ENCODE measurements at regions of chr12 and their contacts with region 1.

Region 1: DNA sequence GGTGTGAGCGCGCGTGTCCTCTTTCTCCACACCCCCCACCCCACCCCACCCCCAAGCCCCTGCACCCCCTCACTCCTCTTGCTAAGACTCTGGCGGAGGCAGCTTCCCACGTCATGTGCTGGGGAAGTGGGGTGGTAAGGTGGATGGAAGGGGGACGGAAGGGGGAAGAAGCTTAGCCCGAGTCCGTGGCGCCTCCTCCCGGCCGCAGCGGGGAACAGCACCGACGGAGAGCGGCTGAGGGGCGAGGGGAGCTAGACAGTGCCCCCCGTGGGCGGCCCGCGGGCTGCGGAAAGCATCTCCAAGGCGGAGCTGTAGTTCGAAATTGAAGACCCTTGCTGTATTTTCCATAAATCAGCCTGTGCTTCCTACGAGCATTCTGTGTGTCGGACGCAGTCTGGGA is 588 bp upstream of the GRIN2B start:
- DNase-seq: peak; percentile 79 to 92
- H3K4me3 ChIP-seq: peak overlapping the region; percentile 91
- H3K4me3 Mint-ChIP-seq: peak overlapping the region; percentile 98
- H3K27ac Mint-ChIP-seq: no peak overlapping the region
- H3K4me1 ChIP-seq: no peaks in the 10 kb centered on the region
- H3K4me1 Mint-ChIP-seq: peaks cover 11% of the 10 kb centered on the region
- H3K27me3 ChIP-seq: no peaks in the 10 kb centered on the region
- H3K27me3 Mint-ChIP-seq: no peaks in the 10 kb centered on the region
- CTCF ChIP-seq: peak; percentile 98

Region 2: GRCh38 chr12:13864081-13864673 is 117.8 kb before region 1 on chr12:
- CTCF ChIA-PET with region 1: interaction called, 56 read pairs
- POLR2A ChIA-PET with region 1: no interaction called
- intact Hi-C with region 1: loop called (anchors 1 kb)
- DNase-seq: peak; percentile 84 to 87
- H3K4me3 ChIP-seq: no peak overlapping the region
- H3K4me3 Mint-ChIP-seq: no peak overlapping the region
- H3K27ac Mint-ChIP-seq: no peak overlapping the region
- H3K4me1 ChIP-seq: peaks cover 23% of the 10 kb centered on the region
- H3K4me1 Mint-ChIP-seq: peaks cover 35% of the 10 kb centered on the region
- H3K27me3 ChIP-seq: no peaks in the 10 kb centered on the region
- H3K27me3 Mint-ChIP-seq: no peaks in the 10 kb centered on the region
- CTCF ChIP-seq: peak; percentile 98 to 99

Region 3: DNA sequence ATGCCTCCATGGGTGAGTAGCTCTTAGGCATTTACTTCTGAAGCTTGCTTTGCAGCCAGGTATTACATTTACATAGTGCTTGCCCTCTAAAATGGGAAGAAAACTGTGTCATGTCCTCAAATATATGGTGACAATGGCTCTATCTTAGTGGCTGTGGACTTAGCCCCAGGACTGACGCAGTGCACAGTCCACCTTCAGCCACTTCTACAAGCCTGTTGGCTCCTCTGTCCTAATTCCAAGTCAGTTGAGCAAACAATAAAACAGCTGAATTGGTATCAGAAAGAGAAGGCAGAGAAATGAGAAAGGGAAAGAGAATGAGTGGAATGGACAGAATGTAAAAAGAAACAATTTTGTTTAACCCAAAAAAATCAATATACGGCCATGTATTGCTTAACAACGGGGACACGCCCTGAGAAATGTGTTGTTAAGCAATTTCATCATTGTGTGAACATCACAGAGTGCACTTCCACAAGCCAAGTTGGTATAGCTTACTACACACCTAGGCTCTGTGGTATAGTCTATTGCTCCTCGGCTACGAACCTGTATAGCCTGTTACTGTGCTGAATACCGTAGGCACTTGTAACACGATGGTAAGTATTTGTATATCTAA is 94.1 kb before region 1 on chr12:
- CTCF ChIA-PET with region 1: interaction called, 5 read pairs
- POLR2A ChIA-PET with region 1: no interaction called
- intact Hi-C with region 1: loop called (anchors 5 kb)
- DNase-seq: peak; percentile 64 to 65
- H3K4me3 ChIP-seq: no peak overlapping the region
- H3K4me3 Mint-ChIP-seq: peak overlapping the region; percentile 33
- H3K27ac Mint-ChIP-seq: peak overlapping the region; percentile 79
- H3K4me1 ChIP-seq: peaks cover 16% of the 10 kb centered on the region
- H3K4me1 Mint-ChIP-seq: peaks cover 40% of the 10 kb centered on the region
- H3K27me3 ChIP-seq: no peaks in the 10 kb centered on the region
- H3K27me3 Mint-ChIP-seq: no peaks in the 10 kb centered on the region
- CTCF ChIP-seq: no peak

Region 4: GRCh38 chr12:13950502-13950901 is 31.5 kb before region 1 on chr12:
- CTCF ChIA-PET with region 1: interaction called, 17 read pairs
- POLR2A ChIA-PET with region 1: interaction called, 4 read pairs
- intact Hi-C with region 1: loop called (anchors 2 kb)
- DNase-seq: peak; percentile 71 to 79
- H3K4me3 ChIP-seq: no peak overlapping the region
- H3K4me3 Mint-ChIP-seq: peak overlapping the region; percentile 36
- H3K27ac Mint-ChIP-seq: peak overlapping the region; percentile 69
- H3K4me1 ChIP-seq: peaks cover 46% of the 10 kb centered on the region
- H3K4me1 Mint-ChIP-seq: peaks cover 44% of the 10 kb centered on the region
- H3K27me3 ChIP-seq: no peaks in the 10 kb centered on the region
- H3K27me3 Mint-ChIP-seq: no peaks in the 10 kb centered on the region
- CTCF ChIP-seq: no peak

Region 5: GRCh38 chr12:13992106-13992505 is 10.1 kb after region 1 on chr12:
- CTCF ChIA-PET with region 1: interaction called, 17 read pairs
- POLR2A ChIA-PET with region 1: no interaction called
- intact Hi-C with region 1: no loop called
- DNase-seq: peak in 1 of 2 experiments; percentile 36
- H3K4me3 ChIP-seq: no peak overlapping the region
- H3K4me3 Mint-ChIP-seq: no peak overlapping the region
- H3K27ac Mint-ChIP-seq: peak overlapping the region; percentile 2
- H3K4me1 ChIP-seq: peaks cover 27% of the 10 kb centered on the region
- H3K4me1 Mint-ChIP-seq: peaks cover 34% of the 10 kb centered on the region
- H3K27me3 ChIP-seq: no peaks in the 10 kb centered on the region
- H3K27me3 Mint-ChIP-seq: no peaks in the 10 kb centered on the region
- CTCF ChIP-seq: no peak

Region 6: DNA sequence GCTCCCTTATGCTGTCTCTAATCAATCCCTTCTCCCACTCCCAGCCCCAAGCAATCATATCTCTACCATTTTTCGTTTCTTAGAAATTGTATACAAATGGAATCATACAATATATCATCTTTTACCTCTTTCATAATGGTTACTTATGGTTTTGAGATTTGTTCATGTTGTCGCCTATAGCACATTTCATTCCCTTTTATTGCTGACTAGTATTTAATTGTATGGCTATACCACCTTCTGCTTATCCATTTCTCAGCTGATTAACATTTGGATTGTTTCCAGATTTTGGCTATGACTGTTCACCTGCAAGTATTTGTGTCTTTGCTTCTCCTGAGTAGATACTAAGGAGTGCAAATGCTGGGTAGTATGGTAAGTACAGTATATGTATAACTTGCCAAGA is 36.1 kb after region 1 on chr12:
- CTCF ChIA-PET with region 1: no interaction called
- POLR2A ChIA-PET with region 1: no interaction called
- intact Hi-C with region 1: no loop called
- DNase-seq: no peak
- H3K4me3 ChIP-seq: no peak overlapping the region
- H3K4me3 Mint-ChIP-seq: no peak overlapping the region
- H3K27ac Mint-ChIP-seq: no peak overlapping the region
- H3K4me1 ChIP-seq: no peaks in the 10 kb centered on the region
- H3K4me1 Mint-ChIP-seq: no peaks in the 10 kb centered on the region
- H3K27me3 ChIP-seq: no peaks in the 10 kb centered on the region
- H3K27me3 Mint-ChIP-seq: no peaks in the 10 kb centered on the region
- CTCF ChIP-seq: no peak

Region 7: GRCh38 chr12:14148489-14149270 is 166.7 kb after region 1 on chr12:
- CTCF ChIA-PET with region 1: no interaction called
- POLR2A ChIA-PET with region 1: no interaction called
- intact Hi-C with region 1: no loop called
- DNase-seq: no peak
- H3K4me3 ChIP-seq: no peak overlapping the region
- H3K4me3 Mint-ChIP-seq: no peak overlapping the region
- H3K27ac Mint-ChIP-seq: no peak overlapping the region
- H3K4me1 ChIP-seq: no peaks in the 10 kb centered on the region
- H3K4me1 Mint-ChIP-seq: no peaks in the 10 kb centered on the region
- H3K27me3 ChIP-seq: no peaks in the 10 kb centered on the region
- H3K27me3 Mint-ChIP-seq: no peaks in the 10 kb centered on the region
- CTCF ChIP-seq: no peak

Region 8: GRCh38 chr12:14284184-14284722 is 302.3 kb after region 1 on chr12:
- CTCF ChIA-PET with region 1: no interaction called
- POLR2A ChIA-PET with region 1: no interaction called
- intact Hi-C with region 1: no loop called
- DNase-seq: no peak
- H3K4me3 ChIP-seq: no peak overlapping the region
- H3K4me3 Mint-ChIP-seq: no peak overlapping the region
- H3K27ac Mint-ChIP-seq: no peak overlapping the region
- H3K4me1 ChIP-seq: no peaks in the 10 kb centered on the region; the same call in 1 of the 2 replicates
- H3K4me1 Mint-ChIP-seq: peaks cover 6% of the 10 kb centered on the region
- H3K27me3 ChIP-seq: no peaks in the 10 kb centered on the region
- H3K27me3 Mint-ChIP-seq: no peaks in the 10 kb centered on the region
- CTCF ChIP-seq: no peak